ENCODE measurements at regions of chrX and their contacts with region 1.

Region 1: GRCh38 chrX:12974796-12975669 is at the start of gene TMSB4X:
- DNase-seq: peak; percentile 91 to 95
- ATAC-seq: peak; percentile 91
- H3K4me3 ChIP-seq: peak within 1 kb of the TSS; percentile 66 to 94
- H3K27ac ChIP-seq: peak within 1 kb of the TSS; percentile 57 to 99
- H3K4me1 ChIP-seq: peaks cover 0 to 2% of the 10 kb centered on the region in 2 donors
- H3K27me3 ChIP-seq: no peaks in the 10 kb centered on the region
- total RNA-seq, gene TMSB4X: 2,762 to 3,390 TPM

Region 2: GRCh38 chrX:12825801-12826200 is 149.2 kb before region 1 on chrX:
- intact Hi-C with region 1: no loop called
- DNase-seq: no peak
- ATAC-seq: no peak
- H3K4me3 ChIP-seq: no peak overlapping the region
- H3K27ac ChIP-seq: no peak overlapping the region
- H3K4me1 ChIP-seq: no peaks in the 10 kb centered on the region
- H3K27me3 ChIP-seq: no peaks in the 10 kb centered on the region

Region 3: DNA sequence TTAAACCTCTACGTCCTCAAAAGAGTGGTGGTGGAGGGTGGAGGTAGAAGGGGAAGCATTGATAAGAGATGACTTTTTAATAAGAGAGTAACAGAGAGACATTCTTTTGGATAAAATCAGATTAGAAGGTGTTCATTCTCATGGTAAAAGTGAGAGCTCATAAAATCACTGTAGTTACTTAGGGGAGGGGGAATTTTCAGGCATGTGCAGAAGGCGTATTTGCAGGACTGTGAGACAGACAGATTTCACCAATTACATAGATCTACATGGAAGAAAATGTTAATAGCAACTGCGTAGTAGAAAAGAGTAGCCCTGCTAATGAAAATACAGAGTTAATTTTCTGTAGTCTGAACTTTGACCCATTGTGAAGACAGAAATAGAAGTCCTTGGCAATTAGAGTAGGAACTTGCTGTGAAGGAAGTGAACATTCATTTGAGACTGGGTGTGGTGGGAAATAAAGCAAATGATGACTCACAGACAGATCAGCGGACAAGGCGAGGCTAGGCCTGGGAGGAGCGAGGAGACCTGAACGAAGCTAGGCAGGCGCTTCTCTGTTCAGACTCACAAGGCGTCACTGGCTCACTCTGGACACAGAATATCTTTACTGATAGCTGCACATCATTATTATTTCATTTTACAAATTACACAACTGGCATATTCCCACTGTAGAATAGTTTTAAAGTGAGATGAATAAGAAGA is 126.6 kb after region 1 on chrX:
- intact Hi-C with region 1: loop called in 1 of 2 experiments (anchors 5 kb)
- DNase-seq: peak in 1 of 2 donors; percentile 76
- ATAC-seq: peak; percentile 90
- H3K4me3 ChIP-seq: no peak overlapping the region
- H3K27ac ChIP-seq: no peak overlapping the region
- H3K4me1 ChIP-seq: no peaks in the 10 kb centered on the region
- H3K27me3 ChIP-seq: no peaks in the 10 kb centered on the region

Region 4: GRCh38 chrX:13376857-13377549 is 402.0 kb after region 1 on chrX:
- intact Hi-C with region 1: loop called in 1 of 2 experiments (anchors 10 kb)
- DNase-seq: peak in 1 of 2 donors; percentile 49
- ATAC-seq: no peak
- H3K4me3 ChIP-seq: no peak overlapping the region
- H3K27ac ChIP-seq: no peak overlapping the region
- H3K4me1 ChIP-seq: peaks cover 2 to 4% of the 10 kb centered on the region in 2 donors
- H3K27me3 ChIP-seq: no peaks in the 10 kb centered on the region

Region 5: GRCh38 chrX:13398073-13398823 is 423.2 kb after region 1 on chrX:
- intact Hi-C with region 1: loop called in 1 of 2 experiments (anchors 5 kb)
- DNase-seq: peak; percentile 76 to 79
- ATAC-seq: peak; percentile 85
- H3K4me3 ChIP-seq: no peak overlapping the region
- H3K27ac ChIP-seq: peak overlapping the region in 1 of 2 donors; percentile 40
- H3K4me1 ChIP-seq: no peaks in the 10 kb centered on the region
- H3K27me3 ChIP-seq: no peaks in the 10 kb centered on the region

Measured in aorta (tissue), 5 donors.